ENCODE measurements at regions of chr1 and their contacts with region 1.

Region 1: GRCh38 chr1:92858564-92859399 is 26.9 kb downstream of the RPL5 start:
- DNase-seq: peak; percentile 57 to 72
- ATAC-seq: peak; percentile 82 to 88
- H3K4me3 ChIP-seq: no peak overlapping the region
- H3K27ac ChIP-seq: peak overlapping the region in 1 of 2 experiments; percentile 37; a peak in 1 of 6 replicates
- H3K4me1 ChIP-seq: no peaks in the 10 kb centered on the region
- CTCF ChIP-seq: peak; percentile 99
- EP300 ChIP-seq: no peak
- POLR2A ChIP-seq: no peak
- RAD21 ChIP-seq: peak; percentile 95 to 96

Region 2: GRCh38 chr1:92870591-92870990 is 11.8 kb after region 1 on chr1:
- CTCF ChIA-PET with region 1: interaction called, 38 read pairs
- POLR2A ChIA-PET with region 1: no interaction called
- DNase-seq: no peak
- ATAC-seq: no peak
- H3K4me3 ChIP-seq: no peak overlapping the region
- H3K27ac ChIP-seq: no peak overlapping the region
- H3K4me1 ChIP-seq: no peaks in the 10 kb centered on the region
- CTCF ChIP-seq: no peak
- EP300 ChIP-seq: no peak
- POLR2A ChIP-seq: no peak
- RAD21 ChIP-seq: no peak

Region 3: GRCh38 chr1:92882819-92883218 is 24.0 kb after region 1 on chr1:
- CTCF ChIA-PET with region 1: interaction called, 17 read pairs
- POLR2A ChIA-PET with region 1: no interaction called
- DNase-seq: no peak
- ATAC-seq: no peak
- H3K4me3 ChIP-seq: no peak overlapping the region
- H3K27ac ChIP-seq: no peak overlapping the region
- H3K4me1 ChIP-seq: 0 out of 3 replicates have a peak, but pooled peaks cover 4% of the 10 kb centered on the region
- CTCF ChIP-seq: no peak
- EP300 ChIP-seq: no peak
- POLR2A ChIP-seq: no peak
- RAD21 ChIP-seq: no peak

Region 4: GRCh38 chr1:92951141-92951582 is 92.4 kb after region 1 on chr1:
- CTCF ChIA-PET with region 1: interaction called, 11 read pairs
- POLR2A ChIA-PET with region 1: no interaction called
- DNase-seq: peak; percentile 31 to 60
- ATAC-seq: peak; percentile 82 to 83
- H3K4me3 ChIP-seq: peak overlapping the region; percentile 3; the same call in 1 of the 3 replicates
- H3K27ac ChIP-seq: peak overlapping the region; percentile 82 to 88
- H3K4me1 ChIP-seq: peaks cover 32% of the 10 kb centered on the region
- CTCF ChIP-seq: no peak
- EP300 ChIP-seq: no peak
- POLR2A ChIP-seq: no peak
- RAD21 ChIP-seq: peak in 1 of 2 experiments; percentile 20; a peak in 2 of 5 replicates

Region 5: GRCh38 chr1:93000751-93001175 is 142.0 kb after region 1 on chr1:
- CTCF ChIA-PET with region 1: interaction called, 24 read pairs
- POLR2A ChIA-PET with region 1: no interaction called
- DNase-seq: no peak
- ATAC-seq: no peak
- H3K4me3 ChIP-seq: no peak overlapping the region
- H3K27ac ChIP-seq: no peak overlapping the region
- H3K4me1 ChIP-seq: peaks cover 4% of the 10 kb centered on the region
- CTCF ChIP-seq: no peak
- EP300 ChIP-seq: no peak
- POLR2A ChIP-seq: no peak
- RAD21 ChIP-seq: no peak

Region 6: DNA sequence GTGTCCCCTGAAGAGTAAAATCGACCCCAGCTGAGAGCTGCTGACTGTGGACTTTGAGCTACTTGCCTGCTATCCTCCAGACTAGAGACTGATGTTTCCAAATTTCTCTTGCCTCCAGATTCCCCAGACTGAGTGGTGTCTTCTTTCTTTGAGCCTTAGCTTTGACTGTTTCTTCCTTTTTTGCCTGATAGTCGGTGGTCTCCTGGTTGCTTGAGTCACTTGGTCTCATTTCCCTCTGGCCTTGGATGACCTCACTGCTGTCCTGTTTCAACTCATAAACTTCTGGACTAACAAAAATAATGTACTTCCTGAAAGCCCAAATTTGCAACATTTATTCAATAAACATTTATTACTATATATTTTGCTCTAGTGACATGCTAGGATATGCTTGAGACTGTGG is 155.4 kb after region 1 on chr1:
- CTCF ChIA-PET with region 1: interaction called, 19 read pairs
- POLR2A ChIA-PET with region 1: no interaction called
- DNase-seq: no peak
- ATAC-seq: no peak
- H3K4me3 ChIP-seq: no peak overlapping the region
- H3K27ac ChIP-seq: no peak overlapping the region
- H3K4me1 ChIP-seq: peaks cover 14% of the 10 kb centered on the region
- CTCF ChIP-seq: no peak
- EP300 ChIP-seq: no peak
- POLR2A ChIP-seq: no peak
- RAD21 ChIP-seq: no peak